Activated CD4-positive, alpha-beta T cell treated with anti-CD3 and anti-CD28 coated beads, Interleukin-2, amount 10 ng/mL, durations not matched to agents 24 days and 14 days (primary cell): ENCODE measurements at regions of chr12 and their contacts with region 1.

Region 1: DNA sequence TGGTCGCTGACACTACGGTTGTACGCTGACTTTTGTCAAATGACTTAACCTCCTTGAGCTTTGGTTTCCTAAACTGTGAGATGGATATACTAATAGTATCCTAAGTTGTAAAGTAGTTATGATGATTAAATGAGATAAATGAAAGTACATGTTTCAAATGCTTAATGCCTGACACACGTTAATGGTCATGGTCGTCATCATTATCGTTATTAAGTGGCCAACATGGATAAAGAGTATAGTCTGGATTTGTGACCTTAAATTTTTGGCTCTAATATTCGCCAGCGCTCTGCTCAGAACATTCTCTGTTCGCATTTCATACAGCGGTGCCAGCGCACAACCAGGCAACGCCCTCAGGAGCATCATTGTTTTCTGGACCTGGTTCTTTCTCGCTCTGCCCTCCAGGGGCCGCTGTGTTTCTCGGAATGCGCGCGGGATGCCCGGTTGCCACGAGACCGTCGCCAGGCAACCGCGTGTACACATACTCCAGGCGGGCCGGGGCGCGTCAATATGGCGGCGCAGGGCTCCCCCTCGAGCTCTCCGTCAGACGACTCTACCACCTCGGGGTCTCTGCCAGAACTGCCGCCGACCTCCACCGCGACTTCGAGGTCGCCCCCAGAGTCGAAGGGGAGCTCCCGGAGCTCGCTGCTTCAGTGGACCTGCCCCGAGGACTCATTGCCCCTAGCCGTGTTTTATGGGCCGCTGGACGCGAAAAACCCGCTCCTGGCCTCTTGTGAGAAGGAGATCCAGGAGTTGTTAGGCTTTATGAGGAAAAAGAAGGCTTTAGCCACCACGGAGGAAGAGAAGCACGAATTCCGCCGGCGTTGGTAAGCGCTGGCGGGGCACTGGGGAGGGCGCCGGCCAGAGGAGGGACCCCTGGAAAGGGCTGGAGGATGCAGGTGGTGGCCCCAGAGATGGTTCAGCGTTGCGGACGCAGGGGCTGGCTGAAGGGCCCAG is at the start of gene CFAP54:
- DNase-seq: peak; percentile 98
- H3K4me3 Mint-ChIP-seq: peak within 1 kb of the TSS; percentile 88
- H3K27ac Mint-ChIP-seq: peak within 1 kb of the TSS; percentile 81
- H3K4me1 Mint-ChIP-seq: peaks cover 32% of the 10 kb centered on the region
- H3K27me3 Mint-ChIP-seq: peaks cover 23% of the 10 kb centered on the region
- total RNA-seq, gene CFAP54: 0.09 TPM in 2 replicates

Region 2: DNA sequence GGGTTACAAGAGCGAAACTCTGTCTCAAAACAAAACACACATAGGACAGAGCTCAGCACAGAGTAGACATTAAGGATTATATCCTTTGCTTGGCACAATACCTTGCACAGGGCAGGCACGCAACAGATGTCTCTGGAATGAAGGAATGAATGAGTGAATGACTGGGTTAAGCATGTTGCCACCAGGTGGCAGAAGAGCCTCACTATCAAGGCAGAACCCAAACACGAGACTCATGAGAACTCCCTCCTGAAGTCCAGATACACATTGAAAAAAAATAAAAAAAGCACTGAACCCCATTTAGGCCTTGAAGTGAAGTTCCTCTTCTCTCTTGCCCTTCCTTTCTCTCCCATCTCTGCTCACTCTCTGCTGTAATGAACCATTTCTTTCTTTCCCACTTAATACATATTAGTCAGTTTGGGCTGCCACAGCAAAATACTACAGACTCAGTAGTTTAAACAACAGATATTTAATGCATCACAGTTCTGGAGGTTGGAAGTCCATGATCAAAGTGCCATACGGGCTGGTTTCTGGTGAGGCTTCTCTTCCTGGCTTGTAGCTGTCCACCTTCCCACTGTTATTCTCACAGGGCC is 427.4 kb before region 1 on chr12:
- intact Hi-C with region 1: loop called (anchors 1 kb)
- DNase-seq: peak; percentile 92
- H3K4me3 Mint-ChIP-seq: no peak overlapping the region
- H3K27ac Mint-ChIP-seq: no peak overlapping the region
- H3K4me1 Mint-ChIP-seq: peaks cover 24% of the 10 kb centered on the region
- H3K27me3 Mint-ChIP-seq: no peaks in the 10 kb centered on the region

Region 3: DNA sequence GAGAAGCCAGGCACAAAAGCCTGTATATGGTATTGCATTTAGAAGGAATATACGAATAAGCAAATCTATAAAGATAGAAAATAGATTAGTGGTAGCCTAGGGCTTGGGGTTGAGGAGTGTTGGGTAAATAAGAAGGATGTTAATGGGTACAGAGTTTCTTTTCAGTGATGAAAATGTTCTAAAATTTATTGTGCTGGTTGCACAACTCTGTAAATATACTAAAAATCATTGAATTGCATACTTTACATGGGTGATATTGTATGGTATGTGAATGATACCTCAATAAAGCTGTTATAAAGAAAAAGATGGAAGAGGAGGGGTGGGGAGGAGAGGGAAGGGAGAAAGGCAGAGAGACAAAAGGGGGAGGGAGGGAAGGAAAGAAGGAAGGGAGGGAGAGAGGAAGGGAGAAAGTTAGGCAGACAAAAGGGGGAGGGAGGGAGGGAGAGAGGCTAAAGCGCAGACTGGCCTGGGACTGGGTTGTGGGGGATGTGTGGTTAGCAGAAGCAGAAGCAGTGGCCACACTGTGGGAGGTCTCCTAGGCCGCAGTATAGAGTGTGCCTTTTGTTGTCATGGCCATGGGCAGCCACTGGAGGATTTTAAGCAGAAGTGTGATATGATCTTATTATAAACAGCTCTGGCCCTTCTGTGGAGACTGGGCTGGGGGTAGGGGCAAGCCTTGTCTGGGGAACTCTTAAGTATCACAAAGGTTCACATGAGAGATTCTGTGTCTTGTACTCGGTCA is 368.9 kb before region 1 on chr12:
- intact Hi-C with region 1: no loop called
- DNase-seq: no peak
- H3K4me3 Mint-ChIP-seq: no peak overlapping the region
- H3K27ac Mint-ChIP-seq: no peak overlapping the region
- H3K4me1 Mint-ChIP-seq: peaks cover 13% of the 10 kb centered on the region
- H3K27me3 Mint-ChIP-seq: no peaks in the 10 kb centered on the region

Region 4: GRCh38 chr12:96237465-96238077 is 251.8 kb before region 1 on chr12:
- intact Hi-C with region 1: loop called (anchors 5 kb)
- DNase-seq: peak; percentile 83
- H3K4me3 Mint-ChIP-seq: peak overlapping the region; percentile 65
- H3K27ac Mint-ChIP-seq: peak overlapping the region; percentile 71
- H3K4me1 Mint-ChIP-seq: peaks cover 65% of the 10 kb centered on the region
- H3K27me3 Mint-ChIP-seq: no peaks in the 10 kb centered on the region

Region 5: DNA sequence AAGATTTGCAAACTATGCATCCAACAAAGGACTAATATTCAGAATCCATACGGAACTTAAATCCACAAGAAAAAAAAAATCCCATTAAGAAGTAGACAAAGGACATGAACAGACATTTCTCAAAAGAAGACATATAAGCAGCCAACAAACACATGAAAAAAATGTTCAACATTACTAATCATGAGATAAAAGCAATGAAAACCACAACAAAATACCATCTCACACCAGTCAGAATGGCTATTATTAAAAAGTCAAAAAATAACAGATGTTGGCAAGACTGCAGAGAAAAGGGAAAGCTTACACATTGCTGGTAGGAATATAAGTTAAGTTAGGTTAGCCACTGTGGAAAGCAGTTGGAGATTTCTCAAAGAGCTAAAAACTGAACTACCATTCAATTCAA is 105.4 kb before region 1 on chr12:
- intact Hi-C with region 1: no loop called
- DNase-seq: no peak
- H3K4me3 Mint-ChIP-seq: no peak overlapping the region
- H3K27ac Mint-ChIP-seq: no peak overlapping the region
- H3K4me1 Mint-ChIP-seq: peaks cover 39% of the 10 kb centered on the region
- H3K27me3 Mint-ChIP-seq: no peaks in the 10 kb centered on the region

Region 6: DNA sequence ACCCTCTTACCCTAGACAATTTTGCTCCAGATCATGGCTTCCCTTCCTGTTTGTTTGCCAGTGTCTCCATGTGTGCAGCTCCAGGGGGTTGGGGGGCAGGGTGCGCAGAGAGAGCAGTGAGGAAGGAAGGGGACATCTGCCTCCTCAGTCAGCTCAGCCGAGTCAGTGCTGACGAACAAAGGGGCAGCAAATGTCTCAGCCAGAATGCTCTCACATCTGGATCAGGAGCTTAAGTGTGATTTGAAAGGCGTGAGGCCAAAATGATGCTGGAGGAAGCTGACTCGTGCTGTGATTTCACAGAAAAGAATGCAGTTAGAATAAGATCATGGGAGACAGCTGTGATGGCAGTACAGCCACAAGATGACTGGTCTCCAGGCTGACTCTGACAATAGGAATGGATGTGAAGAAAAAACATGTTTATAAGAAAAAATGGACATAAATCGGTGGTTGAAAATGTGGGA is 62.1 kb before region 1 on chr12:
- intact Hi-C with region 1: loop called (anchors 2 kb)
- DNase-seq: peak; percentile 68
- H3K4me3 Mint-ChIP-seq: peak overlapping the region; percentile 63
- H3K27ac Mint-ChIP-seq: peak overlapping the region; percentile 80
- H3K4me1 Mint-ChIP-seq: peaks cover 37% of the 10 kb centered on the region
- H3K27me3 Mint-ChIP-seq: no peaks in the 10 kb centered on the region

Region 7: DNA sequence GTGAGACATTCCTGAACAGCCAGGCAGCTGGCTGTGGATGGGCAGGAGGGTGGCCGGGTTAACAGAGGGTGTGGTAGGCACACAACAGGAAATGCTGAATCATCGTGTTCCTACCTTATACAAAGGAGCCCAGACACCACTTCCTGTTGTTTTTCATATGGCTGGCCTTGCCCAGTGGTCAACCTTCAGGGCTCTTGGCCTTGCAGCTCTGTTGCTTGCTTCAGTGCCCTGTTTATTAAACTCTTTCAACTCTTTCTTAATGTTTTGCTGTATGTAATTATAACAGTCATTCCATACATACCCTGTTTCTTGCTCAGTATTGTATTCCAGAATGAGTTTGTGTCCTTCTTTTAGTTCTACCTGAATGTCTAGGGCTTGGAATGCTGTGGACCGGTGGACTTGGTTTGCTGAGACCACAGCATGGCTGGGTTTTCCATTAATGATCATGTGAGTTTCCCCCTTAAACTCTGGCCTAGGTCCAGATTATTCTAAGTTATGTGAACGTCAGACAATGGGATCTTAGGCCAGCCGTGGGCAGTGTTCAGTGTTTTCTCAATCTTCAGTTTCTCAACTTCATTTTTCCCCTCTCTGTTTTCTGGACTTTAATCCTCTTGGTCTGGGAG is 11.9 kb after region 1 on chr12:
- intact Hi-C with region 1: loop called (anchors 2 kb)
- DNase-seq: peak; percentile 81
- H3K4me3 Mint-ChIP-seq: peak overlapping the region; percentile 51
- H3K27ac Mint-ChIP-seq: peak overlapping the region; percentile 82
- H3K4me1 Mint-ChIP-seq: peaks cover 40% of the 10 kb centered on the region
- H3K27me3 Mint-ChIP-seq: no peaks in the 10 kb centered on the region